Panc1 (cell line): ENCODE measurements at regions of chr16 and their contacts with region 1.

Region 1: DNA sequence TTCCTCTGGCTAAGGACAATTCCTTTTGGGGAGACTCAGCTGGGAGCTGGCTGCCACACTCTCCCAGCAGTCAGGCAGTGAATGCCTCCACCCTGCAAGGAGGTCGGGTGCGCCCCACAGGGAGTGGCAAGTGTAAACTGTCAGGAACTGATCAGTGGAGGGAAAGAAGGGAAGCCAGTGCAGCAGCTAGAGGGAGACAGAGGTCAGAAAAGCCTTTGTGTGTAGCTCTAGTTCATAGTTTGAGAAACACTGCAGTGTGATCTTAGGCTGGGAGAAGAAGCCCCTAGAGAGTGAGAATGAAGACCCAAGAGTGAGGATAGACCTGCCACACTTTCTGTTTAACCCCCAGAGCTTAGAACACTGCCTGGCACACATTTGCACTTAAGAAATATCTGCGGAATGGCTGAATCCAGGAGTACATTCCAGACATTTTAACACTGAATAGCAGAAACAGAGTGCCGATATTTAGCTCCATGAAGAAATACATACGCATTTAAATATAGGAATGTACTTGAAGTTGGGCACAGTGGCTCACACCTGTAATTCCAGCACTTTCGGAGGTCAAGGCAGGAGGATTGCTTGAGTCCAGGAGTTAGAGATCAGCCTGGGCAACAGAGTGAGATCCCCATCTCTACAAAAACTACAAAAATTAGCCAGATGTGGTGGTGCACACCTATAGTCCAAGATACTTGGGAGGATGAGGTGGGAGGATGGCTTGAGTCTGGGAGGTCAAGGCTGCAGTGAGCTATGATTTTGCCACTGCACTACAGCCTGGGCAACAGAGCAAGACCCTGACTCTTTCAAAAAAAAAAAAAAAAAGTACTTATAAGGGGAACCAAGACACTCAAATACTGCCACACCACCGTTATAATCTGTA is 11.1 kb upstream of the SLC5A11 start:
- DNase-seq: no peak
- ATAC-seq: peak; percentile 87
- H3K4me3 ChIP-seq: no peak overlapping the region
- H3K27ac ChIP-seq: no peak overlapping the region
- H3K4me1 ChIP-seq: peaks cover 7% of the 10 kb centered on the region; the same call in 1 of the 2 replicates
- H3K27me3 ChIP-seq: no peaks in the 10 kb centered on the region
- CTCF ChIP-seq: peak; percentile 88

Region 2: DNA sequence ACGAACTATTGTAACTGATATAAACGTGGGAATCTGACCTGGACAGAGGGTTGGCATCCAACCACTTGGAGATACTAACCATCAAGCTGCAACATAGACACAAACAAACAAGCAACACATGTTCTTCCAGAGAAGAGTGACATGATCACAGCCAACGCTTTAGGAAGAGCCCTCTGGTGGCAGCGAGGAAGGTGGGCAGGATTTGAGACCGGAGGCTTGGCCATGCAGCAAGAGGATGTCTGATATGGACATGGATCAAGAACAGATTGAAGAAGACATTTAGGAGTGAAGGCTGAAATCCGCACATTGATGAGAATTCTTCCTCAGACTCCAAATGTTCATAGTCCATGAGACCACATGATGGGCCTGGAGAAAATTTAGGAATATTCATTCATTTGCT is 145.6 kb before region 1 on chr16:
- CTCF ChIA-PET with region 1: no interaction called
- POLR2A ChIA-PET with region 1: no interaction called
- in situ Hi-C with region 1: no loop called
- intact Hi-C with region 1: no loop called
- DNase-seq: no peak
- ATAC-seq: peak; percentile 80
- H3K4me3 ChIP-seq: no peak overlapping the region
- H3K27ac ChIP-seq: peak overlapping the region; percentile 19; the same call in 1 of the 2 replicates
- H3K4me1 ChIP-seq: peaks cover 8% of the 10 kb centered on the region
- H3K27me3 ChIP-seq: no peaks in the 10 kb centered on the region
- CTCF ChIP-seq: peak; percentile 88

Region 3: GRCh38 chr16:24858219-24859041 is 23.7 kb after region 1 on chr16:
- CTCF ChIA-PET with region 1: interaction called, 3 read pairs
- POLR2A ChIA-PET with region 1: interaction called, 17 read pairs
- in situ Hi-C with region 1: no loop called
- intact Hi-C with region 1: no loop called
- DNase-seq: no peak
- ATAC-seq: no peak
- H3K4me3 ChIP-seq: no peak overlapping the region
- H3K27ac ChIP-seq: no peak overlapping the region
- H3K4me1 ChIP-seq: peaks cover 15% of the 10 kb centered on the region
- H3K27me3 ChIP-seq: no peaks in the 10 kb centered on the region
- CTCF ChIP-seq: no peak

Region 4: DNA sequence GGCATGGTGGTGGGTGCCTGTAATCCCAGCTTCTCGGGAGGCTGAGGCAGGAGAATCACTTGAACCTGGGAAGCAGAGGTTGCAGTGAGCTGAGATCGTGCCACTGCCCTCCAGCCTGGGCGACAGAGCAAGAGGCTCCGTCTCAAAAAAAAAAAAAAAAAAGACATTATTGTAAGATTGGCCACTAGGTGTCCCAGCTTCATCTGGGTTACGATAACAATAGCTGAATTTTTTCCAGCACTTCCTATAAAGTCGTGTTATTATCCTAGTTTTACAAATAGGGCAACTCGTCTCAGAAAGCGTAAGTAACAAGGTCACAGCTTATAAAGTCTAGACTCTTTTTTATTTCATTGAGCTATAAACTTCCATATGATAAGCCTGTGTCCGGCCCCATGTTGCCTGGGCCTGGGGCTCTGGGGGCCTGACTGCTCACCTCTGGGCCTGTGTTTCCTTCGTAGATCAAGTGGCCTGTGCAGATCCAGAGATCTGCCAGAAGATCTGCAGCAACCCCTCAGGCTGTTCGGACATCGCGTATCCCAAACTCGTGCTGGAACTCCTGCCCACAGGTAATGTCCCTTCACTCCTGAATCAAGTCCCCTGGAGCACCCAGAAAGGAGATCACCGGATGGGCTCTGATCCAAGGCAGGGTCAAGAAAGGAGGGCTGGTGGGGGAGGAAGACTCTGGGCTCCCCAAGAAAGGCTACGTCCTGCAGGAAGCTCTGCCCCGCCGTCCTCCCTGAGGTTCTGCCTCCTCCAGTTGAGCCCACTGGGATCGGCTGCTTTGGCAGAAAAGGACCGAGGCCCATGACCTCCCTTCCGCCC is 71.7 kb after region 1 on chr16:
- CTCF ChIA-PET with region 1: no interaction called
- POLR2A ChIA-PET with region 1: interaction called, 14 read pairs
- in situ Hi-C with region 1: no loop called
- intact Hi-C with region 1: no loop called
- DNase-seq: no peak
- ATAC-seq: peak; percentile 62; the same call in 1 of the 2 replicates
- H3K4me3 ChIP-seq: no peak overlapping the region
- H3K27ac ChIP-seq: no peak overlapping the region
- H3K4me1 ChIP-seq: no peaks in the 10 kb centered on the region
- H3K27me3 ChIP-seq: no peaks in the 10 kb centered on the region
- CTCF ChIP-seq: peak; percentile 77; the same call in 1 of the 2 replicates